K562 (cell line): ENCODE measurements at regions of chr20 and their contacts with region 1.

Region 1: DNA sequence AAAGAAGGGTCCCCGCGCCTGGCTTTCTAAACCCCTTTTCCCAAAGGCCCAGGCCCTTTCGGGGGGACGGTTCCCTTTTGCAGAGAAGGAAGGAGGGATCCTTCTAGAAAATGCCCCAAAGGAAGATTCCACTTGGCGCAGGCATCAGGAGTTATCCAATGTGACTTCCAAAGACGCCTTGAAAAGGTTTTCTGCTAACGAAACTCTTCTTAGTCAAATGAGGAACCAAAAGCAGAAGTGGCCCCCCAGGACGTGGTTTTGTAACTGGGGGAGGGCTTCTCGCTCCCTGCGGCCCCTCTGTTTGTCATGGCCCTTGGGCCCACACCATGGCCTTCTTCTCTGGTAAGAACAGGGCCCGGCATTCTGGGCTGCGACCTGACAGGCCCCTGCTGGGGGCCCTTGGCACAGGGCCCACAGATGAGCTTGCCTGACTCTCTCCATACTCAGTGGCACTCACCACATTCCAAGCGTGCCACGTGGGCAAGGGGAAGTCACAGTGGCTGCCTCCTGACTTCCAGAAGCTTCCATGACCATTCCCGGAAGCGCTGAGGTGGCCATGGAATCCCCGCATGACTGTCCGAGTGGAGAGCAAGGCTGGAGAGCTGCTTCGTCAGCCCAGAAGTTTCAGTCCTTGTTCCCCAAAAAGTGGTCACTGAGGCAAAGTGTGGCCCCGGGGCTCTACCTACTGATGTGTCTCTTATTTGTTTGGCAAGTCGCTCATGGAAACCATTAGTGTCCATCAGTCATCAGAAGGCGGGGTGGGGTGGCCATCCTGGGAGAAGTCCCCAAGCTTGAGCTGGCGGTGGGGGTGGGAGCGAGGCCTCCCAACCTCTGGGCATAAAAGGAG is 834 bp upstream of the CTSZ start:
- DNase-seq: peak in 3 of 4 experiments; percentile 39 to 55 (median 53)
- ATAC-seq: peak; percentile 2; the same call in 1 of the 3 replicates
- H3K4me3 ChIP-seq: peak overlapping the region; percentile 66
- H3K27ac ChIP-seq: peak overlapping the region; percentile 90
- H3K4me1 ChIP-seq: peaks cover 59 to 89% of the 10 kb centered on the region in 2 experiments
- H3K27me3 ChIP-seq: no peaks in the 10 kb centered on the region
- CTCF ChIP-seq: no peak
- EP300 ChIP-seq: no peak
- POLR2A ChIP-seq: no peak
- RAD21 ChIP-seq: no peak

Region 2: DNA sequence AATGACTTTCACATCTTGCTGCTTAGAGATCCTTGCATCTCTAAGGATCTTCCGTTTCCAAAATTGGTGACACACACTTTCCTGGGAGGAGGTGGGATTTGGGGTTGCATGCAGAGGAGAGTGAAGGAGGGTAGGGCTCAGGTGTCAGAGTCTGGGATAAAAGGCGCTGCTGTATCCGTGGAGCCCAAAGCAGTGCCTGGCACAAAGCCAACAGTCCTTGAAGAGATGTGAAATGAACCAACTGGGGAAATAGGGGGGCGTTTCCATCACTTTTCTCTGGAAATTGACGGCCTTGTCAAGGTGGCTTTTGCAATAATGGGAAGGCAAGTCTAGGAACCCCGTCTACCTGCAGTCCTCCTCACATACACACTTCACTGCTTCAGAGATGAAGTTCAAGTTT is 86.3 kb before region 1 on chr20:
- CTCF ChIA-PET with region 1: no interaction called
- POLR2A ChIA-PET with region 1: no interaction called
- in situ Hi-C with region 1: no loop called
- intact Hi-C with region 1: no loop called
- DNase-seq: peak in 1 of 4 experiments; percentile 25
- ATAC-seq: no peak
- H3K4me3 ChIP-seq: no peak overlapping the region
- H3K27ac ChIP-seq: no peak overlapping the region
- H3K4me1 ChIP-seq: no peaks in the 10 kb centered on the region; a peak in 1 of 5 replicates
- H3K27me3 ChIP-seq: peaks cover 5 to 10% of the 10 kb centered on the region in 2 experiments; a peak in 4 of 5 replicates
- CTCF ChIP-seq: no peak
- EP300 ChIP-seq: no peak
- POLR2A ChIP-seq: no peak
- RAD21 ChIP-seq: no peak

Region 3: DNA sequence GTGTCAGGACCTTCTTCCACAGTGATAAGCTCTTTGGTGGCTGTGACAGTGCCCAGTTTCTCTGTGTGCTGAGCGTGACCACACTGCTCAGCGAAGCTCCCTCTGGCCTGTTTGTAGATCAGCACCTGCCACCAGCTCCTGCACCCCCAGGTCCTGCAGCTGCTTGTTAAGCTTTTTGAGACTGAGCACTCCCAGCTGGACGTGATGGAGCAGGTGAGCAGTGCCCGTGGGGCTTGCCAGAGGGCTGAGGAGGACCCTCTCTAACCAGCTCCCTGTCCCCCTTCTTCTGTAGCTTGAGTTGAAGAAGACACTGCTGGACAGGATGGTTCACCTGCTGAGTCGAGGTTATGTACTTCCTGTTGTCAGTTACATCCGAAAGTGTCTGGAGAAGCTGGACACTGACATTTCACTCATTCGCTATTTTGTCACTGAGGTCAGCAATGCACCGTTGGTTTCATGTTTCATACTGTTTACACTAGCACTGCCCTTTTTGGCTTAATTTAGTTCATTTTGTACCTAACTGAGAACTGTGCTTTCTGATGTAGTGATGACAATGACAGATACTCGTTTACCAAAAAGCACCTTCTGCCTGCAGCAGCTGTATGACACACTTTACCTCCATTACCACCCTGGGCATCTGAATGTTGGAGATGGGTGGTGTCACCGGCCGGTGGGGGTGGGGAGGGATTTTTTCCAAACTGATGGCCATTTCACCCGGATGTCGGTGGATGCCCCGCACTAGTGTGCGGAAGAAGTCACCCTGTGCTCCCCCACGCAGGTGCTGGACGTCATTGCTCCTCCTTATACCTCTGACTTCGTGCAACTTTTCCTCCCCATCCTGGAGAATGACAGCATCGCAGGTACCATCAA is 14.3 kb before region 1 on chr20:
- CTCF ChIA-PET with region 1: no interaction called
- POLR2A ChIA-PET with region 1: interaction called, 15 read pairs
- in situ Hi-C with region 1: no loop called
- intact Hi-C with region 1: no loop called
- DNase-seq: no peak
- ATAC-seq: no peak; the same call in 2 of the 3 replicates
- H3K4me3 ChIP-seq: no peak overlapping the region
- H3K27ac ChIP-seq: no peak overlapping the region
- H3K4me1 ChIP-seq: peaks cover 0 to 7% of the 10 kb centered on the region in 2 experiments; a peak in 1 of 5 replicates
- H3K27me3 ChIP-seq: no peaks in the 10 kb centered on the region
- CTCF ChIP-seq: no peak
- EP300 ChIP-seq: no peak
- POLR2A ChIP-seq: 0 out of 2 replicates have a peak, but pooled peaks have one; percentile 15
- RAD21 ChIP-seq: no peak

Region 4: GRCh38 chr20:59020938-59021551 is 13.2 kb after region 1 on chr20:
- CTCF ChIA-PET with region 1: no interaction called
- POLR2A ChIA-PET with region 1: interaction called, 25 read pairs
- in situ Hi-C with region 1: no loop called
- intact Hi-C with region 1: no loop called
- DNase-seq: peak; percentile 58 to 94 (median 72)
- ATAC-seq: peak; percentile 86
- H3K4me3 ChIP-seq: peak overlapping the region; percentile 32; the same call in 1 of the 2 replicates
- H3K27ac ChIP-seq: peak overlapping the region; percentile 96
- H3K4me1 ChIP-seq: peaks cover 48 to 55% of the 10 kb centered on the region in 2 experiments
- H3K27me3 ChIP-seq: no peaks in the 10 kb centered on the region
- CTCF ChIP-seq: no peak
- EP300 ChIP-seq: peak; percentile 96
- POLR2A ChIP-seq: peak; percentile 65
- RAD21 ChIP-seq: no peak

Region 5: GRCh38 chr20:59439243-59439642 is 431.4 kb after region 1 on chr20:
- CTCF ChIA-PET with region 1: no interaction called
- POLR2A ChIA-PET with region 1: no interaction called
- in situ Hi-C with region 1: no loop called
- intact Hi-C with region 1: no loop called
- DNase-seq: peak; percentile 6 to 37 (median 19)
- ATAC-seq: peak; percentile 76
- H3K4me3 ChIP-seq: no peak overlapping the region
- H3K27ac ChIP-seq: no peak overlapping the region
- H3K4me1 ChIP-seq: no peaks in the 10 kb centered on the region
- H3K27me3 ChIP-seq: peaks cover 11 to 19% of the 10 kb centered on the region in 2 experiments; a peak in 3 of 5 replicates
- CTCF ChIP-seq: peak; percentile 37 to 46 (median 44); a peak in 5 of 6 replicates
- EP300 ChIP-seq: no peak
- POLR2A ChIP-seq: no peak
- RAD21 ChIP-seq: no peak